Sigmoid colon (tissue), 7 donors: ENCODE measurements at regions of chr3 and their contacts with region 1.

Region 1: DNA sequence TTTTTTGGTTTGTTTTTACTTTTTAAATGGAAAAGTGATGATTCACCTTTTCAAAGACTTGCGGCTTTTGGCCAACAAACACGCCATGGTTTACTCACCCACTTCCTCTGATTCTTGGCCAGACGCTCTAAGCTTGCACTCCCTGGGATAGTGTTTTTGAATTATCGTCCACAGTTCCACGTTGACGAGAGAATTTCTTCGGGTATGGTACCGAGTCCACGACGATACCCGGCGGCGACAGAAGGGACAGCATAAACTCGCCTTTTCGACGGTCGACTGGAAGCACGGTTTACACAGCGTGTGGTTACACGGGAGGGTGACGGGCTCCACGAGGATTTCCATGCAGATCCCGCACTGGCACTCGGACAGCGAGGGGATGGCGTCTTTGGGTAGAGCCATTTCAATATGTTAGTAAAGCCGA is 783 bp downstream of the RNF168 start:
- DNase-seq: peak; percentile 81
- H3K4me3 ChIP-seq: peak overlapping the region; percentile 72 to 87 (median 80)
- H3K27ac ChIP-seq: peak overlapping the region; percentile 94 to 97 (median 96)
- H3K4me1 ChIP-seq: peaks cover 0 to 34% (median 27%) of the 10 kb centered on the region in 4 donors
- H3K27me3 ChIP-seq: no peaks in the 10 kb centered on the region
- CTCF ChIP-seq: no peak
- EP300 ChIP-seq: no peak
- POLR2A ChIP-seq: no peak

Region 2: GRCh38 chr3:196317687-196318467 is 184.9 kb before region 1 on chr3 and contains the start of gene DYNLT2B:
- intact Hi-C with region 1: loop called (anchors 2 kb)
- DNase-seq: peak; percentile 92
- H3K4me3 ChIP-seq: peak within 1 kb of the TSS; percentile 54 to 93 (median 80)
- H3K27ac ChIP-seq: peak within 1 kb of the TSS; percentile 82 to 93 (median 92)
- H3K4me1 ChIP-seq: no peaks in the 10 kb centered on the region
- H3K27me3 ChIP-seq: no peaks in the 10 kb centered on the region
- CTCF ChIP-seq: no peak
- EP300 ChIP-seq: no peak
- POLR2A ChIP-seq: peak; percentile 16 to 48
- total RNA-seq, gene DYNLT2B: 6.8 to 17.8 (median 13.2) TPM

Region 3: GRCh38 chr3:196432137-196432879 is 70.5 kb before region 1 on chr3 and contains the start of gene UBXN7:
- intact Hi-C with region 1: loop called (anchors 1 kb)
- DNase-seq: peak; percentile 97
- H3K4me3 ChIP-seq: peak within 1 kb of the TSS; percentile 68 to 100 (median 90)
- H3K27ac ChIP-seq: peak within 1 kb of the TSS; percentile 90 to 99 (median 94)
- H3K4me1 ChIP-seq: peaks cover 0 to 24% (median 23%) of the 10 kb centered on the region in 4 donors
- H3K27me3 ChIP-seq: no peaks in the 10 kb centered on the region
- CTCF ChIP-seq: peak in 1 of 4 experiments; percentile 8
- EP300 ChIP-seq: no peak
- POLR2A ChIP-seq: peak; percentile 31 to 52
- total RNA-seq, gene UBXN7: 14.7 to 22.4 (median 16.7) TPM

Region 4: DNA sequence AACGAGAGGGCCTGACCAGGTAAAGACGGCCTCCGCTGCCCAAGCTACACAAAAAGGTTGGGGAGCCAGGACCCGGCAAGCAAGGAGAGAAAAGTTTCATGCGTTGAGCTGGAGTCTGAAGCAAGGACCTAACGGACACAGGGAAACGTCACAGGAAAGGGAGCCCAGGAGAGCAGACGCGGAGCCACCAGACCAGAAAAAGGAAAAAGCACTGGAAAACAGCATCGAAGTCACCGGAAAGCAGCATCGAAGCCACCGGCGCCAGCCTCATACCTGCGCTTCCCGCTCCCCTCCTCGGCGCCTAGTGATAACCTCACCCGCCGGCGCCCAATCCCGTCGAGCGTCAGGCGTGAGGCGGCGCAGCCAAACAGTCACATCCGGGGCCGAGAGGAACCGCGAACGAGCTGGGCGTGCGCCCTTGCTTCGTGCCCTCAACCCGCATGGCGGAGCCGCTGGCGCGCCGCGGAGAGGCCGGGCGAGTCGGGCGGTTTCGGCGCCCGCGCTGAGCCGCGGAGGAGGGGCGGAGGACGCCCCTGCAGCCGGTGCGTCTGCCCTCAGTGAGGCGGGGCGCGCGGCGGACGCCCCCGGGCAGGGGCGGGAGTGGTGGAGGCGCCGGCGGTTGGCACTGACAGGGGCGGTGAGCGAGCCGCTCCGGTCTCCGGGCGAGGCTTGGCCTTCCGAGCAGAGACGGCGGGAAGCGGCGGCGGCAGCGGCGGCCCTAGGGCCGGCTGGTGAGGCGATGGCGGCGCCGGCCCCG is 65.6 kb after region 1 on chr3 and contains the starts of genes FBXO45 and WDR53:
- intact Hi-C with region 1: loop called (anchors 2 kb)
- DNase-seq: peak; percentile 97
- H3K4me3 ChIP-seq: peak within 1 kb of the TSS; percentile 65 to 97 (median 76)
- H3K27ac ChIP-seq: peak within 1 kb of the TSS; percentile 83 to 97 (median 88)
- H3K4me1 ChIP-seq: peaks cover 0 to 29% (median 27%) of the 10 kb centered on the region in 4 donors
- H3K27me3 ChIP-seq: no peaks in the 10 kb centered on the region
- CTCF ChIP-seq: no peak
- EP300 ChIP-seq: no peak
- POLR2A ChIP-seq: peak; percentile 84 to 87
- total RNA-seq, gene FBXO45: 6.5 to 10.9 (median 8.1) TPM
- total RNA-seq, gene WDR53: 2.9 to 7.2 (median 4.6) TPM

Region 5: GRCh38 chr3:196639483-196640296 is 136.9 kb after region 1 on chr3 and contains the start of gene NRROS:
- intact Hi-C with region 1: no loop called
- DNase-seq: peak; percentile 83
- H3K4me3 ChIP-seq: peak within 1 kb of the TSS; percentile 17 to 63 (median 52)
- H3K27ac ChIP-seq: peak within 1 kb of the TSS; percentile 63 to 85 (median 71)
- H3K4me1 ChIP-seq: peaks cover 0 to 13% (median 11%) of the 10 kb centered on the region in 4 donors
- H3K27me3 ChIP-seq: peaks cover 2 to 9% (median 4%) of the 10 kb centered on the region in 3 donors
- CTCF ChIP-seq: no peak
- EP300 ChIP-seq: no peak
- POLR2A ChIP-seq: no peak
- total RNA-seq, gene NRROS: 4.4 to 7.5 (median 5.9) TPM